Right ventricle myocardium inferior (tissue), 1 donor: ENCODE measurements at regions of chr12 and their contacts with region 1.

Region 1: GRCh38 chr12:51172515-51173431 is at the start of gene TFCP2:
- DNase-seq: peak; percentile 99
- ATAC-seq: peak; percentile 99
- total RNA-seq, gene TFCP2: 22.3 TPM

Region 2: DNA sequence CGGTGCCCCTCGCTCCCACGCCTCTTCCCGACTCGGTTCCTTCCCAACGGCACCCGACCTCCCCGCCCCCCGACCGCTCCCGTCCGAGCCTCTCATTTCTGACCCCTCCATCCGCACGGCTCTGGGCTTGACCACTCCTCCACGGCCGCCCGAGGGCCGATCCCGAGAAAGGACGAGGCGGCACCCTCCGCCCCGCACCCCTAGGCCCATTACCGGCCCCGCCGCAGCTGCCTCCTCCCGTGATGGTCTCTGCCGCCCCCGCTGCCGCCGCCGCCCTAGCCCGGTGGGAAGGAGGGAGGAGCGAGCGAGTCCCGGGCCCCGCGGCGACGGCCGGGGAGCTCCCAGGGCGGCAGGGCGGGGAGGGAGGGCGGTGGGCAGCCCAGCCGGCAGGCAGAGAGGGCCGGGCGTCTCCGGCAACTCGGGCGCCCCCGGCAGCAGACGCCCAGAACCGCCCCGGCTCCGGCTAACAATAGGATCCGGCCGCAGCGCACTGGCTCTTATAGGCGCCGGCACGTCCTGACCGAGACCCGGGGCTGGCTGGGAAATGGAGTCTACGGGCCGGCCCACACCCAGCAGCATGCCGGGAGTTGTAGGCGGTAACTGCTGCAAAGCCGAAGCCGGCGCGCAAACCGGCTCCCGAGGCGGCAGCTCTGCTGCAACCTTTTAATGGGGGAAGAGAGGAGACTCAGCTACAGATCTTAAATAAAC is 89.5 kb before region 1 on chr12 and contains the start of gene CSRNP2:
- intact Hi-C with region 1: loop called (anchors 2 kb)
- DNase-seq: peak; percentile 99
- ATAC-seq: peak; percentile 100
- total RNA-seq, gene CSRNP2: 25.7 TPM

Region 3: GRCh38 chr12:51217968-51218606 is 45.3 kb after region 1 on chr12 and contains the start of gene POU6F1:
- intact Hi-C with region 1: loop called (anchors 5 kb)
- DNase-seq: peak; percentile 83
- ATAC-seq: peak; percentile 93
- total RNA-seq, gene POU6F1: 8.6 TPM

Region 4: GRCh38 chr12:51341259-51342007 is 168.7 kb after region 1 on chr12:
- intact Hi-C with region 1: no loop called
- DNase-seq: no peak
- ATAC-seq: peak; percentile 83

Region 5: DNA sequence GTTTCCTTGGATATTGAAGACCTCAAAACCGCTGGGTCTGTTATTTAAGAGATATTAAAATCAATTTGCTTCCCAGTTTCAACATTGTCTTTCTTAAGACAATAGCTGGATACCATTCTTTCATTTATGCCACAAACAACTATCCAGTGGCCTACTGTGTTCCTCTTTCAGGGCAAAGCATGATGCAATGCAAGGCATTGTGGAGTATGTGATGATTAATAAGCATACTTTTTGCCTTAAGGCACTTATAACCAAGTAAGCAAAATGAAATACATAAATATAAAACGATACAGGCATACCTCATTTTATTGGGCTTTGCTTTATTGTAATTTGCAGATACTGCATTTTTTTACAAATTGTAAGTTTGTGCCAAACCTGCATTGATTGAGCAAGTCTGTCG is 463.8 kb after region 1 on chr12:
- intact Hi-C with region 1: no loop called
- DNase-seq: no peak
- ATAC-seq: no peak